Endothelial cell of umbilical vein (primary cell): ENCODE measurements at regions of chr1 and their contacts with region 1.

Region 1: GRCh38 chr1:113072757-113073478 is at the start of gene LRIG2:
- DNase-seq: peak; percentile 98
- H3K4me3 ChIP-seq: peak within 1 kb of the TSS; percentile 59 to 96 (median 69)
- H3K27ac ChIP-seq: peak within 1 kb of the TSS; percentile 71
- H3K4me1 ChIP-seq: peaks cover 11% of the 10 kb centered on the region
- H3K27me3 ChIP-seq: no peaks in the 10 kb centered on the region
- CTCF ChIP-seq: peak; percentile 73 to 86
- POLR2A ChIP-seq: peak; percentile 96
- total RNA-seq, gene LRIG2: 14.4 and 20.1 TPM in 2 replicates

Region 2: GRCh38 chr1:112809253-112809684 is 263.6 kb before region 1 on chr1:
- CTCF ChIA-PET with region 1: interaction called, 28 read pairs
- POLR2A ChIA-PET with region 1: no interaction called
- dilution Hi-C with region 1: no loop called
- intact Hi-C with region 1: loop called (anchors 1 kb)
- DNase-seq: peak; percentile 80
- H3K4me3 ChIP-seq: no peak overlapping the region
- H3K27ac ChIP-seq: no peak overlapping the region
- H3K4me1 ChIP-seq: peaks cover 3% of the 10 kb centered on the region
- H3K27me3 ChIP-seq: no peaks in the 10 kb centered on the region
- CTCF ChIP-seq: peak; percentile 94 to 96
- POLR2A ChIP-seq: no peak

Region 3: GRCh38 chr1:112882271-112882744 is 190.6 kb before region 1 on chr1:
- CTCF ChIA-PET with region 1: interaction called, 74 read pairs
- POLR2A ChIA-PET with region 1: no interaction called
- dilution Hi-C with region 1: no loop called
- intact Hi-C with region 1: loop called (anchors 1 kb)
- DNase-seq: no peak
- H3K4me3 ChIP-seq: no peak overlapping the region
- H3K27ac ChIP-seq: no peak overlapping the region
- H3K4me1 ChIP-seq: no peaks in the 10 kb centered on the region
- H3K27me3 ChIP-seq: no peaks in the 10 kb centered on the region
- CTCF ChIP-seq: no peak
- POLR2A ChIP-seq: no peak

Region 4: GRCh38 chr1:112955781-112956543 is 117.0 kb before region 1 on chr1 and contains the start of gene SLC16A1:
- CTCF ChIA-PET with region 1: interaction called, 15 read pairs
- POLR2A ChIA-PET with region 1: interaction called, 6 read pairs
- dilution Hi-C with region 1: no loop called
- intact Hi-C with region 1: loop called (anchors 1 kb)
- DNase-seq: peak; percentile 96
- H3K4me3 ChIP-seq: peak within 1 kb of the TSS; percentile 91 to 99 (median 97)
- H3K27ac ChIP-seq: peak within 1 kb of the TSS; percentile 89
- H3K4me1 ChIP-seq: peaks cover 42% of the 10 kb centered on the region
- H3K27me3 ChIP-seq: no peaks in the 10 kb centered on the region
- CTCF ChIP-seq: peak in 1 of 2 donors; percentile 35
- POLR2A ChIP-seq: peak; percentile 99
- total RNA-seq, gene SLC16A1: 117 and 148 TPM in 2 replicates

Region 5: GRCh38 chr1:113057006-113057405 is 15.9 kb before region 1 on chr1:
- CTCF ChIA-PET with region 1: interaction called, 81 read pairs
- POLR2A ChIA-PET with region 1: interaction called, 3 read pairs
- dilution Hi-C with region 1: no loop called
- intact Hi-C with region 1: no loop called
- DNase-seq: peak; percentile 64
- H3K4me3 ChIP-seq: no peak overlapping the region
- H3K27ac ChIP-seq: no peak overlapping the region
- H3K4me1 ChIP-seq: peaks cover 20% of the 10 kb centered on the region
- H3K27me3 ChIP-seq: no peaks in the 10 kb centered on the region
- CTCF ChIP-seq: no peak
- POLR2A ChIP-seq: no peak

Region 6: GRCh38 chr1:113508364-113509164 is 435.6 kb after region 1 on chr1:
- CTCF ChIA-PET with region 1: no interaction called
- POLR2A ChIA-PET with region 1: no interaction called
- dilution Hi-C with region 1: no loop called
- intact Hi-C with region 1: no loop called
- DNase-seq: no peak
- H3K4me3 ChIP-seq: no peak overlapping the region
- H3K27ac ChIP-seq: no peak overlapping the region
- H3K4me1 ChIP-seq: no peaks in the 10 kb centered on the region
- H3K27me3 ChIP-seq: no peaks in the 10 kb centered on the region
- CTCF ChIP-seq: no peak
- POLR2A ChIP-seq: no peak